Activated CD8-positive, alpha-beta T cell treated with anti-CD3 and anti-CD28 coated beads for 36 hours (primary cell): ENCODE measurements at regions of chr15 and their contacts with region 1.

Region 1: DNA sequence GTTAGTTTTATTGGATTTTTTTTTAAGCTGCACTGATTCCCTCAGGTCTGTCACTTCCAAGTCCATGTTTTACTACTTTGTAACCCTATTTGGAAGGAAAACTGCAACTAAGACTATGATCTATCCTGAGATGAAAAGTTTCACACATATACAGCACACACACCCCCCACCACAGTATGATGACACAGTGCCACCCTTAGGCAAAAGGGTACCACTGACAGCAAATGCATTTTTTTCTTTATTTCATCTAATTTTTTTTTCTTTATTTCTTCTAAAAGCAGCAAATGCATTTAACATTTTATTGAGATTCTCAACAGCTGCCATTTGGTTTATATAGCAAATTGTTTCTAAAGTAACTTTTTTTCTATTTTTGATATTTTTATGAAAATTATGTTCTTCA is 21.2 kb downstream of the NGRN start:
- DNase-seq: peak; percentile 59
- ATAC-seq: peak; percentile 82
- H3K4me3 Mint-ChIP-seq: no peak overlapping the region
- H3K27ac Mint-ChIP-seq: no peak overlapping the region
- H3K4me1 Mint-ChIP-seq: no peaks in the 10 kb centered on the region
- H3K27me3 Mint-ChIP-seq: no peaks in the 10 kb centered on the region
- CTCF ChIP-seq: peak; percentile 61

Region 2: GRCh38 chr15:89041507-89041906 is 1245.2 kb before region 1 on chr15:
- CTCF ChIA-PET with region 1: no interaction called
- POLR2A ChIA-PET with region 1: no interaction called
- intact Hi-C with region 1: no loop called
- DNase-seq: no peak
- ATAC-seq: no peak
- H3K4me3 Mint-ChIP-seq: no peak overlapping the region
- H3K27ac Mint-ChIP-seq: no peak overlapping the region
- H3K4me1 Mint-ChIP-seq: peaks cover 2% of the 10 kb centered on the region
- H3K27me3 Mint-ChIP-seq: peaks cover 8% of the 10 kb centered on the region
- CTCF ChIP-seq: no peak

Region 3: GRCh38 chr15:90300988-90301706 is 14.5 kb after region 1 on chr15:
- CTCF ChIA-PET with region 1: interaction called, 79 read pairs
- POLR2A ChIA-PET with region 1: interaction called, 3 read pairs
- intact Hi-C with region 1: no loop called
- DNase-seq: peak; percentile 82
- ATAC-seq: peak; percentile 82
- H3K4me3 Mint-ChIP-seq: no peak overlapping the region
- H3K27ac Mint-ChIP-seq: no peak overlapping the region
- H3K4me1 Mint-ChIP-seq: peaks cover 30% of the 10 kb centered on the region
- H3K27me3 Mint-ChIP-seq: peaks cover under 1% of the 10 kb centered on the region
- CTCF ChIP-seq: peak; percentile 89